H1 (cell line): ENCODE measurements at regions of chr12 and their contacts with region 1.

Region 1: DNA sequence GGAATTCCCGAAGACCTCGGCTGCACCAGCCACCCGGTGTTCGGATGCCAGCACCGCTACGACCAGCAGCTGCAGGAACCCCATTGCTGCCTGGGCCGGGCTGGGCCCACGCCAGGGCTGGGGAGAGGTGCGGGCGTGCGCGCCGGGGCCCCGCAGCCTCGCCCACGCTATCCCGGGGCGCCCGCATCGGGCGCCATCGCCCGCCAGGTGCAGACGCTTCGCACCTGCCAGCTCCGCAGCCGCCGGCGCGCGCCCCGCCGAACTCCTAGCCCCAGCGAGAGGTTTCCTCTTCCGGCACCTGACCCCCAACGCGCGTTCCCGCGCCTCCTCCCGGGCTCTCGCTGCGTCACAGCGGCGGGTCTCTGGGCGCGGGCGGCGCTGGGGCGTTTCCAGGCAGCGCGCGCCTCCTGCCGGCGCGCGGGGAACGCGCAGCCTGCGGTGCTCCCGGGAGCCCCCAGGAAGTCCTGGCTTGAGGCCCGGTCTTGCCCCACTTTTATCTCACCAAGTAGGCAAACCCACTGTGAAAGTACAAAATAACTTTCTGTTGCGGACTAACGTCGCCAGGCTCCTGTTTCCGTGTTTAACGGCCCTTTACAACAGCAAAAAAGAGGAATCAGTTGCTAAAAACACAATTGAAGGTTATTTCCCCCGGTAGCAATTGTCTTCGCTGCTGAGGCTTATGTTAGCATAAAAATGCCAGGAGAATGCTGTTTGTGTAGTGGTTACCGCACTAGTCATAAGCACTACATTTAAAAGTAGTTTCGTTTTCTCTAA is at the start of gene TM7SF3:
- DNase-seq: peak; percentile 89 to 94
- H3K4me3 ChIP-seq: peak within 1 kb of the TSS; percentile 69 to 88 (median 82)
- H3K27ac ChIP-seq: peak within 1 kb of the TSS; percentile 60
- H3K4me1 ChIP-seq: peaks cover 0 to 10% (median 8%) of the 10 kb centered on the region in 4 experiments; a peak in 6 of 7 replicates
- H3K27me3 ChIP-seq: no peaks in the 10 kb centered on the region
- CTCF ChIP-seq: peak; percentile 77 to 92 (median 82)
- EP300 ChIP-seq: peak in 1 of 2 experiments; percentile 51; a peak in 1 of 3 replicates
- POLR2A ChIP-seq: peak in 1 of 2 experiments; percentile 82; a peak in 2 of 3 replicates
- RAD21 ChIP-seq: peak; percentile 76 to 84
- total RNA-seq, gene TM7SF3: 57.6 and 57.9 TPM in 2 replicates

Region 2: GRCh38 chr12:27003421-27004381 is 10.6 kb before region 1 on chr12:
- CTCF ChIA-PET with region 1: interaction called, 11 read pairs
- POLR2A ChIA-PET with region 1: interaction called, 5 read pairs
- DNase-seq: no peak
- H3K4me3 ChIP-seq: no peak overlapping the region
- H3K27ac ChIP-seq: no peak overlapping the region
- H3K4me1 ChIP-seq: peaks cover 2 to 8% (median 4%) of the 10 kb centered on the region in 4 experiments; a peak in 5 of 7 replicates
- H3K27me3 ChIP-seq: no peaks in the 10 kb centered on the region
- CTCF ChIP-seq: no peak
- EP300 ChIP-seq: no peak
- POLR2A ChIP-seq: no peak
- RAD21 ChIP-seq: no peak

Region 3: DNA sequence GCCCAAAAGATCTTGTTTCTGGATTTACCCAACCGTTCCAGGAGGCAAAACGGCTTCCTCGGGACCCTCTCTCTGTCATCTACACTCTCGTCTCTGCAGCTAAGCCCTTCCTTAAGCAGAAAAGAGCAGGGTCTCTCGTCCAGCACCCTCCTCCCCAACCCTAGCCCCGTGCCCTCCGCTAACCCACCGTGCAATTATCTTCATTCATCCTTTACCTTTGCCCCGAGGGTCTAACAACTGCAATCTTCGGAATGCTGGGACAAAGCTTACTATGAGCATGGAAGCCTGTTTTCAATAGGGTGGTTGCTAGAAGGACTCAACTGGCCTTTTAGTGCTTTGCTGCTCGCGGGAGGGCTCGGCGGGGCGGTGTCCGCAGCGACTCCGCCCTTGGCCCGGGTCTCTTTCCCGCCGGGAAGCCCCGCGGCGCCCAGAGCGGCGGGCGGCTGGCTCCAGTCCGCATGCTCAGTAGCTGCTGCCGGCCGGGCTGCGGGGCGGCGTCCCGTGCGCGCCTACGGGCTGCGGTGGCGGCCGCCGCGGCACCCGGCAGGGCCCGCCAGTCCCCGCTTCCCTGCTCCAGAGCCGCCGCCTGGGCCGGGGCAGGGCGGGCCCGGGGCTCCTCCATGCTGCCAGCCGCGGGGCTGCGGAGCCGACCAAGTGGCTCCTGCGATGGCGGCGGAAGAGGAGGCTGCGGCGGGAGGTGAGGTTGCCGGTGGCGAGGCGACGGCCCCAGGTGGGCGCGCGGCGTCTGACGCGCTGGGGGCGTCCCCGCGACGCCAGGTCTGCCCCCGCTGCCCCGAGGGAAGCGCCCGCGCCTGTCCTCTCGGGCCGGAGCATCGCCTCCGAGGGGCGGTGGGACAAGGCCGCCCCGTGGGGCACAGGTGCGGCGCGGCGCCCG is 318.4 kb after region 1 on chr12 and contains the start of gene BMAL2:
- CTCF ChIA-PET with region 1: no interaction called
- POLR2A ChIA-PET with region 1: no interaction called
- DNase-seq: peak in 1 of 2 experiments; percentile 80
- H3K4me3 ChIP-seq: peak within 1 kb of the TSS; percentile 68 to 80 (median 71)
- H3K27ac ChIP-seq: peak within 1 kb of the TSS; percentile 24; the same call in 1 of the 2 replicates
- H3K4me1 ChIP-seq: peaks cover 0 to 8% (median 2%) of the 10 kb centered on the region in 4 experiments; a peak in 5 of 7 replicates
- H3K27me3 ChIP-seq: peaks cover 3 to 14% (median 7%) of the 10 kb centered on the region in 4 experiments
- CTCF ChIP-seq: no peak
- EP300 ChIP-seq: no peak
- POLR2A ChIP-seq: peak in 1 of 2 experiments; percentile 68; a peak in 1 of 3 replicates
- RAD21 ChIP-seq: no peak
- total RNA-seq, gene BMAL2: 20.6 and 22.8 TPM in 2 replicates